OCI-LY7 (cell line): ENCODE measurements at regions of chr9 and their contacts with region 1.

Region 1: DNA sequence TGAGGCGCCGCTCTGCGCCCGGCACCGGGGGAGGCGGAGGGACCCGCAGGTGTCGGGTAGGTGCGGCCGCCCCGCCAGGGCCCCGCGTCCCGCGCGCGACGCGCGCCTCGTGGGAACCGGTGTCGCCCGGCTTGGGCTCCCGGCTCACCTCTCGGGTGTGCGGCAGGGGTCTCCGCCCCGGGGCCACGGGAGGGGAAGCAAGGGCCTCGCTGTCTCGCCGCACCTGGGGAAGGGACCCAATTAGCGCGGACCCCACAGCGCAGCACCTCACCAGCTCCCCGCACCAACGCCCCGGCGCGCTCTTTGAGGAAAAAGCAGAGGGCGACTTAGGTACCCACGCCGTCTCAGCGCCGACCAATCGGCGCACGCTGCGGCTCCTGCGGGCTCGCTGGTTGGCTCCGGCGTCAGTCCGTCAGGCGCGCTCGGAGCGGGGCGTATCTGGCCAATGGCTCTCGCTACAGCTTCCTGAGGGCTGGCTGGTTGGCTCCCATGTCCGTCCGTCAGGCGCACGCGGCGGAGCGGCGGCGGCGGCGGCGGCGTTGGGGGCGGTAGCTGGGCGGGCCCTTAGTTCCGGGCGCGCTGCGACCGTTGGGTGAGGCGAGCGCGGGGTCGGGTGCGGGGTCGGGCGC is at the start of gene TRAF2:
- DNase-seq: peak; percentile 99
- H3K4me3 ChIP-seq: peak within 1 kb of the TSS; percentile 96
- H3K27ac ChIP-seq: peak within 1 kb of the TSS; percentile 62
- H3K4me1 ChIP-seq: peaks cover 21% of the 10 kb centered on the region
- CTCF ChIP-seq: no peak
- total RNA-seq, gene TRAF2: 31.4 and 34.7 TPM in 2 replicates

Region 2: GRCh38 chr9:136790927-136791641 is 95.0 kb before region 1 on chr9 and contains the start of gene TMEM141:
- CTCF ChIA-PET with region 1: no interaction called
- POLR2A ChIA-PET with region 1: no interaction called
- intact Hi-C with region 1: loop called (anchors 5 kb)
- DNase-seq: peak; percentile 99
- H3K4me3 ChIP-seq: peak within 1 kb of the TSS; percentile 72
- H3K27ac ChIP-seq: peak within 1 kb of the TSS; percentile 70
- H3K4me1 ChIP-seq: peaks cover 28% of the 10 kb centered on the region
- CTCF ChIP-seq: no peak
- total RNA-seq, gene TMEM141: 61.9 and 70.2 TPM in 2 replicates

Region 3: DNA sequence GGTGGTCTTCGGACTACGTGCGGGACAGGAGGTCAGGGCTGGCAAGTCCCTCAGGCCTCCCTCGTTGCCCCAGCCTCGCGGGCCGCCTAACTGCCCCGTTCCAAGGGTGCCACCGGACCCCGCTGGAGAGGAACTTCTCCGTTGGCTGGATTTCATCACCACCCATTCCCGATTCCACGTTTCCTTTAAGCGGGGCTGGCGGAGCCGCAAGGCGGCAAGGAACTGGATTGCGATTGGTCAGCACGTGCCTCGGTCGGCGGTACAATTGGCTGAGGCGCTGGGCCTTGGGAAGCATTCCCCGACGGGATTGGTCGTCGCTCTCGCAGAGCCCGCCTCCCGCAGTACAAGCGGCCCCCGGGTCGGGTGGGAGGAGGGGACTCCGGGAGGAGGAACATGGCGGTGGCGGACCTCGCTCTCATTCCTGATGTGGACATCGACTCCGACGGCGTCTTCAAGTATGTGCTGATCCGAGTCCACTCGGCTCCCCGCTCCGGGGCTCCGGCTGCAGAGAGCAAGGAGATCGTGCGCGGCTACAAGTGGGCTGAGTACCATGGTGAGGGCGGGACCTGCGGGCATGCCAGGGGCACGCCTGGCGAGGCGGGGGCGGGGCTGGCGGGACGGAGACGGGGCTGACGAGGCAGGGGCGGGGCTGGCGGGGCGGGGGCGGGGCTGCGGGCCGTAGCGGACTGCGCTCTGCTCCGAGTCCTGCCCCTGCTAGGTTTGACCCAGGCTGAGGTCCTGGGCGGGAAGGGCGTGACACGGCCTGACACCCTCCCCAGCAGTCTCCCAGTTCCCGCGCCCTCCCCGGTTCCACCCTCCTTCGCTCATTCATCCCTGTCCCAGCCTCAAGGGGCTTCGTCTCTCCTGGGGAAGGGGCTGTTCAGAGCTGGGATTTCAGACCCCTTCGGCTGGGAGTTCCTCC is 36.8 kb before region 1 on chr9 and contains the start of gene PHPT1:
- CTCF ChIA-PET with region 1: no interaction called
- POLR2A ChIA-PET with region 1: no interaction called
- intact Hi-C with region 1: loop called (anchors 1 kb)
- DNase-seq: peak; percentile 99
- H3K4me3 ChIP-seq: peak within 1 kb of the TSS; percentile 87
- H3K27ac ChIP-seq: peak within 1 kb of the TSS; percentile 55
- H3K4me1 ChIP-seq: peaks cover 10% of the 10 kb centered on the region
- CTCF ChIP-seq: no peak
- total RNA-seq, gene PHPT1: 56.9 and 81.9 TPM in 2 replicates

Region 4: GRCh38 chr9:136865735-136866103 is 20.3 kb before region 1 on chr9:
- CTCF ChIA-PET with region 1: no interaction called
- POLR2A ChIA-PET with region 1: interaction called, 3 read pairs
- intact Hi-C with region 1: loop called (anchors 2 kb)
- DNase-seq: no peak
- H3K4me3 ChIP-seq: peak overlapping the region; percentile 92
- H3K27ac ChIP-seq: no peak overlapping the region
- H3K4me1 ChIP-seq: peaks cover 13% of the 10 kb centered on the region
- CTCF ChIP-seq: no peak

Region 5: DNA sequence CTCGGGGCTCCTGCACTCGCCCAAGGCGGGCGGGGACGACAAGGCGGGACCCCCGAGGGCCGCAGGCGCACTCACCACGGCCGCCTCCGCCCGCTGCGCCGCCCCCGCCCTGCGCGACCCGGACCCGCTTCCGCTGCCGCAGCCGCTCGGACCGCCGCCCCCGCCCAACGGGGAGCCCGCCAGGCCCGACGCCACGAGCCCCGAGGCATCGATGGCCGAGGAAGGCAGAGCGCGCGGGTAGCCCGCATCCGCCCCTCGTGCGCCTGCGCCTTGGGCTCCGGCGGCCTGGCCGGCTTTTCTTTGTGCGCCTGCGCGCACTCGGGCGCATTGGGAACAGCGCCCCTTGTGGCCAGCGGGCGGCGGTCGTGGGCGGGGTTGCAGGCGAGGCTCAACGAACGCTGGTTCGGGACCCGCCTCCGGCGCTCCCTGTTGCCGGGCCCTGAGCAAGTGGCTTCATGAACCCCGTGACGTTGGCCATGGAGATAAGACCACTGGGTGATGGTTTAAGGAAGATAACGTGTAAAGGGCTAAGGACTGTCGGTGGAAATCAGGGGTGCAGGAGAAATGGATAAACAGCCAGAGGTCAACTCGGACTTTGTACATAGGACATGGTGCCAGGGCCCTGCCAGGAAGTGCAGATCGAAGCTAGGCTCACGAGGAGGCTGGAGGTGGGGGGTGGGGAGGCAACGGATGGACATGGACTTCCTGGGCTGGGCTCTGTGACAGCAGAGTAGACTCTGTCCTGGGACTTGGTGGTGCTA is 58.6 kb after region 1 on chr9 and contains the starts of genes C8G and FBXW5:
- CTCF ChIA-PET with region 1: no interaction called
- POLR2A ChIA-PET with region 1: no interaction called
- intact Hi-C with region 1: loop called (anchors 2 kb)
- DNase-seq: peak; percentile 98
- H3K4me3 ChIP-seq: peak within 1 kb of the TSS; percentile 82
- H3K27ac ChIP-seq: peak within 1 kb of the TSS; percentile 40
- H3K4me1 ChIP-seq: peaks cover 29% of the 10 kb centered on the region
- CTCF ChIP-seq: peak; percentile 86
- total RNA-seq, gene C8G: 0.95 and 1.0 TPM in 2 replicates
- total RNA-seq, gene FBXW5: 78.7 and 89.6 TPM in 2 replicates

Region 6: GRCh38 chr9:137029058-137029936 is 143.2 kb after region 1 on chr9:
- CTCF ChIA-PET with region 1: no interaction called
- POLR2A ChIA-PET with region 1: no interaction called
- intact Hi-C with region 1: loop called (anchors 2 kb)
- DNase-seq: peak; percentile 78
- H3K4me3 ChIP-seq: peak overlapping the region; percentile 65
- H3K27ac ChIP-seq: no peak overlapping the region
- H3K4me1 ChIP-seq: peaks cover 45% of the 10 kb centered on the region
- CTCF ChIP-seq: peak; percentile 83